Prostate gland (tissue), 2 donors: ENCODE measurements at regions of chr4 and their contacts with region 1.

Region 1: GRCh38 chr4:41990365-41991111 is at the start of gene SLC30A9:
- DNase-seq: peak; percentile 97
- H3K4me3 ChIP-seq: peak within 1 kb of the TSS; percentile 85 to 96
- H3K27ac ChIP-seq: peak within 1 kb of the TSS; percentile 76 to 85
- H3K4me1 ChIP-seq: no peaks in the 10 kb centered on the region
- H3K27me3 ChIP-seq: no peaks in the 10 kb centered on the region
- CTCF ChIP-seq: peak in 2 of 4 experiments; percentile 48 to 62
- POLR2A ChIP-seq: peak; percentile 90
- total RNA-seq, gene SLC30A9: 61.4 to 71.6 TPM

Region 2: GRCh38 chr4:41734366-41734765 is 256.2 kb before region 1 on chr4:
- intact Hi-C with region 1: no loop called
- DNase-seq: no peak
- H3K4me3 ChIP-seq: no peak overlapping the region
- H3K27ac ChIP-seq: no peak overlapping the region
- H3K4me1 ChIP-seq: no peaks in the 10 kb centered on the region
- H3K27me3 ChIP-seq: peaks cover 3% of the 10 kb centered on the region
- CTCF ChIP-seq: no peak
- POLR2A ChIP-seq: no peak

Region 3: DNA sequence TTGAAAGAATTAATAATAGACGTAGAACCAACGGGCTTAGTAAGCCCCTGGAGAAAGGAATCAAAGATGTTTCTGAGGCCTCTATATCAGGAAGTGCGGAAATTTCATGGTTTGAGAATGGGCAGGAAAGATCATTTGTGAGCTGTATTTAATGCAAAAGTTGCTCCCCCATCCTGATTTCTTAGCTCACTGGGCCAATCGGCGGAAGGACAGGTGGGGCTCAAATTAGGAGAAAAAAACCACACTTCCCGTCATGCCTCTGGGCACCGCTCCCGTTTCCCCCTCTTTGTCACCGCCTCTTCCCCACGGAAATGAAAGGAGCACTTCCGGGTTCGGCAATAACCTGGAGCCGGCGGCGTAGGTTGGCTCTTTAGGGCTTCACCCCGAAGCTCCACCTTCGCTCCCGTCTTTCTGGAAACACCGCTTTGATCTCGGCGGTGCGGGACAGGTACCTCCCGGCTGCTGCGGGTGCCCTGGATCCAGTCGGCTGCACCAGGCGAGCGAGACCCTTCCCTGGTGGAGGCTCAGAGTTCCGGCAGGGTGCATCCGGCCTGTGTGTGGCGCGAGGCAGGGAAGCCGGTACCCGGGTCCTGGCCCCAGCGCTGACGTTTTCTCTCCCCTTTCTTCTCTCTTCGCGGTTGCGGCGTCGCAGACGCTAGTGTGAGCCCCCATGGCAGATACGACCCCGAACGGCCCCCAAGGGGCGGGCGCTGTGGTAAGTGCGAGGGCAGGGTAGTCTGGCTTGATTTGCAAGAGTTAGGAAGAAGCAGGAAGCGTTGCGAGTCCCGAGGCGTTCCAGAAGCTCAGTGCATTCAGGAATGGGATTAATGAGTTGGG is 55.5 kb before region 1 on chr4 and contains the start of gene TMEM33:
- intact Hi-C with region 1: loop called (anchors 5 kb)
- DNase-seq: peak; percentile 89
- H3K4me3 ChIP-seq: peak within 1 kb of the TSS; percentile 65 to 72
- H3K27ac ChIP-seq: peak within 1 kb of the TSS; percentile 58 to 61
- H3K4me1 ChIP-seq: no peaks in the 10 kb centered on the region
- H3K27me3 ChIP-seq: no peaks in the 10 kb centered on the region
- CTCF ChIP-seq: peak in 2 of 4 experiments; percentile 37 to 48
- POLR2A ChIP-seq: peak; percentile 58
- total RNA-seq, gene TMEM33: 36.5 to 77.7 TPM